ENCODE measurements at regions of chr4 and their contacts with region 1.

Region 1: DNA sequence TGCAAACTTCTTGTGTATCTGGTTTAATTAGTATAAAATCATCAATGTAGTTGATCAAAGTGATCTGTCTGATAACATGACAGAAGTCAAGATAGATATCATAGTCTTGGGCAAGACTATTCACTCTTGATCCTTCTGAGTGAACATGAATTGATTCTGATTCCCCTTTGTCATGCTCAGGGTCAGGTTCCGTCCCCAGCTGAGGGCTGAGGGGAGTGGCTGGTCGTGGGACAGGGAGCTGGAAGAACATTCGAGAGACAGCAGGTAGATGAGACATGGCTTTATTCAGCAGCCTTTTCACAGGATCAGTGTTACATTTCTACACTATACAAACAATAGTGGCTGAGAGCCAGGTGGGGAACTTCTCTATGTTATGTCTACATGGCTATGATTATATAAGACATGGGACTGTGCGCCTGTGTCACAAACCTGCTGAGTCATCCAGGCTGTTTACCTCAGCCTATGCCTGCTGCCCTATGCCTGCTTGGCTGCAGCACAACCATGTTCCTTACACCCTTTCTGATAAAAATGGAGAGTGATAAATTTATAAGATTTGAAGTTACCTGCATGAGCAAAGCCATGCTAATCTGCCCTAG is 586.9 kb upstream of the NR3C2 start:
- DNase-seq: no peak
- ATAC-seq: peak in 1 of 4 donors; percentile 18
- H3K4me3 ChIP-seq: no peak overlapping the region
- H3K27ac ChIP-seq: no peak overlapping the region
- H3K4me1 ChIP-seq: no peaks in the 10 kb centered on the region
- H3K27me3 ChIP-seq: no peaks in the 10 kb centered on the region
- CTCF ChIP-seq: no peak
- POLR2A ChIP-seq: no peak

Region 2: DNA sequence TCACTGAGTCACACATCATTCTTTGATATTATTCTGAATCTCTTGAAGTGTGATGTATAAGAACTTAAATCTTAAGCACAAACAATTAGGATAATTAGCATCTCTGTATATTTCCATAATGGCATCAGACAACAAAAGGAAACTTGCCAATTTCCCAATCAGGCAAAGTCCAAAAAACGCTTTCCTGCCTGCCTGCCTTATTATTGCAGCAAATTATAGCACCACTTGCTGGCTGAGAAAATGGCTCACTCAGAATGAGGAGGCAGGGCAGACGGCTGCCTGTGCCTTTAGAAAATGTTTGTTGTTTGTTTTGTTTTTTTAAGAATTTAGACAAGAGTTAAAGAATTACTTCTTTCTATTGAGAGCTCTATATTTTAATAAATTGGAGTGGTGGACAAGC is 559.2 kb before region 1 on chr4:
- intact Hi-C with region 1: loop called in 1 of 2 experiments (anchors 10 kb)
- DNase-seq: no peak
- ATAC-seq: peak; percentile 50 to 71 (median 66)
- H3K4me3 ChIP-seq: no peak overlapping the region
- H3K27ac ChIP-seq: no peak overlapping the region
- H3K4me1 ChIP-seq: no peaks in the 10 kb centered on the region
- H3K27me3 ChIP-seq: no peaks in the 10 kb centered on the region
- CTCF ChIP-seq: peak in 3 of 4 donors; percentile 27 to 41 (median 33)
- POLR2A ChIP-seq: no peak